ENCODE measurements at regions of chr5 and their contacts with region 1.

Region 1: GRCh38 chr5:176481711-176482110 is 33.5 kb downstream of the FAF2 start:
- DNase-seq: no peak
- H3K4me3 ChIP-seq: no peak overlapping the region
- H3K27ac ChIP-seq: no peak overlapping the region
- H3K4me1 ChIP-seq: no peaks in the 10 kb centered on the region
- H3K27me3 ChIP-seq: no peaks in the 10 kb centered on the region
- CTCF ChIP-seq: no peak
- POLR2A ChIP-seq: no peak

Region 2: DNA sequence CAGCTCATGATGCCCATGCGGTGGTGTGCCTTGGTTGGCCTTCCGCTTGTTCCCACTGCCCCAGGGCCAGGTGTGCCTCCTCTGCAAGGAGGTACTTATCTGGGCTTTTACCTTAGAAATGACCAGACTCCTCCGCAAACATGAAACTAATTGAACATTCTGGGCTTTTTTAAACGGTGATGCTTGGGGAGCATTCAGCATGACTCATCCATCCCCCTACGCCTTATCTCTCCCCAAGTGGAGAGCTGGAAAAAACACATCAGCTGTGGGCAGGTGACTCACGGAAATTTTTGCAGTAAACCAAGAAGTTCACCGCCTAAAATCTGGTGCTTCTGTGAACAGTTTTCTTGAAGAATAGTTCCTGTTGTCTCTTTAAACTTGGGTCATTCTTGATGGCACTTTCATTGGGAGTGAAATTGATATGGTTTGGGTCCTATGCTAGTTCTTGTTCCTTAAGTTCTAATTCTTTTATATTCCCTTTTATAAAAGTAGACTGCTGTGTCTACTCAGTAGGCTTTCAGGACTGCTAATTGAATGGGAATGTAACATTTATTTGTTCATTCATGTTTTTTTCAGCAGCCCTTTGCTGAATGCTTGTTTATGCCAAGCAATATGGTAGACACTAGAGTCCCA is 963.8 kb before region 1 on chr5:
- CTCF ChIA-PET with region 1: no interaction called
- POLR2A ChIA-PET with region 1: no interaction called
- dilution Hi-C with region 1: no loop called
- intact Hi-C with region 1: no loop called
- DNase-seq: no peak
- H3K4me3 ChIP-seq: no peak overlapping the region
- H3K27ac ChIP-seq: no peak overlapping the region
- H3K4me1 ChIP-seq: no peaks in the 10 kb centered on the region
- H3K27me3 ChIP-seq: no peaks in the 10 kb centered on the region
- CTCF ChIP-seq: no peak
- POLR2A ChIP-seq: no peak

Region 3: DNA sequence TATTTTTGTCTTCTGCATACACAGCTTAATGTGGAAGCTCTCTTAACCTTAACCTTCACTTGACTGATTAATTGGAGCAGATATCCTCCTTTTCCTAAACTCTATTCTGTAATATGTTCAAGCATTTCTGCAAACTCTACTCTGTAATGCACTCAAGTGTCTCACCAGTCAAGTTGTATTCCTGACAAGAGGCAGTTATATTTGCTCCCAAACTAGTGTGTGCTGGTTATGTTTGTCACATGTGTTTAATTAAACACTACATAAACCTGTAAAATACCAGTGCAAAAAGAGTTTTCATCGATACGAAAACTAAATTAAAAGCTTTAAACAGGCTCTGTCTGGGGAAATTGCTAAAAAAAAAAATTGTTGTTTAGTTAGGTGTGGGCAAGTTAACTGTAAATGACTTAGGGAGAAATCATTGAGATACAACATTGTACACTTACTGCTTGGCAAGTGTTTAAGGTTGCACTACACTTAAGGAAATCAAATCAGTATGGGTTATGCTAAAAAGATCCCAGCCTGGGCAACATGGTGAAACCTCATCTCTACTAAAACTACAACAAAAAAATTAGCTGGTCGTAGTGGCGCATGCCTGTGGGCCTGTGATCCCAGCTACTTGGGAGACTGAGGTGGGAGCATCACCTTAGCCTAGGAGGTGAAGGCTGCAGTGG is 26.9 kb before region 1 on chr5:
- CTCF ChIA-PET with region 1: no interaction called
- POLR2A ChIA-PET with region 1: no interaction called
- dilution Hi-C with region 1: no loop called
- intact Hi-C with region 1: loop called (anchors 1 kb)
- DNase-seq: no peak
- H3K4me3 ChIP-seq: no peak overlapping the region
- H3K27ac ChIP-seq: no peak overlapping the region
- H3K4me1 ChIP-seq: no peaks in the 10 kb centered on the region
- H3K27me3 ChIP-seq: no peaks in the 10 kb centered on the region
- CTCF ChIP-seq: no peak
- POLR2A ChIP-seq: no peak

Region 4: DNA sequence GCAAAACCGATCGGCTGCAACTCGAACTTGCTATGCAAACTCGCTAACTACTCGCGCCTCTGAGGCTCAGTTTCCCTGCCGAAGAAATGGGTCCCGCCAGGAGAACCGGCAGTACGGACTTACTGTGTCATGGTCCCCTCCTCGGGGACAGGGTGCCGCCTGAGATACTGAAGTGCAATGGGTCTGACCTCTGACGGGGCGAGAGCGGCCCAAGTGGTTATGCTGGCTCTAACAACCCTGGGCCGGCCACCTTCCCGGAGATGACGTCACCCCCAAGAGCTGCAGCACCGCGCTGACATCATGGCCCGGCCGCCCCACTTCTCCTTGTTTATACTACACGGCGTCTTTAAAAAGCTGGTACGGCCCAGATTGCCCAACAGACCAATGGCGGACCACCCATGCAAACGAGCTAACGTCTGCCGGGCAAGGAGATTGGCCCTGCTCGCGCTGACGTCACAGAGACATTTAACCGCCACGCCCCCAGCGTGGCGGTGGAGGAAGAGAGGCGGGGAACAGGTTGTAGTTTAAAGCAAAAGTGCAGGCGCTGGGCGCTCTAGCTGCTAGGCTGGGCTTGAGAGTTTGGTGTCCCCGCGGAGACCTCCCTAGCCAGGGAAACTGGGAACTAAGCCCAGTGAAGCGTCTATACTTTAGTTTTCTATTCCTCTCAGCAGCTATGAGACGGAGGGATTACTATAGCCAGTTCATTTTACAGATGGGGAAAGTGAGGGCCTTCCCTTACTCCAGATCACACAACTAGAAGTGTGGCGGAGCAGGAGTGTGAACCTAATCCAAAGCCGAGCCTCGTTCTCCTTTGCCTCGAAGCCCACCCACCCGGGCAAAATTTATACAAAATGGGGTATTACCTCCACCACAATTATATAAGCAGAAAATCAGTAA is 56.1 kb after region 1 on chr5:
- CTCF ChIA-PET with region 1: no interaction called
- POLR2A ChIA-PET with region 1: no interaction called
- dilution Hi-C with region 1: no loop called
- intact Hi-C with region 1: no loop called
- DNase-seq: peak; percentile 99
- H3K4me3 ChIP-seq: peak overlapping the region; percentile 68 to 79 (median 79)
- H3K27ac ChIP-seq: peak overlapping the region; percentile 83
- H3K4me1 ChIP-seq: peaks cover 59% of the 10 kb centered on the region
- H3K27me3 ChIP-seq: no peaks in the 10 kb centered on the region
- CTCF ChIP-seq: no peak
- POLR2A ChIP-seq: no peak

Region 5: DNA sequence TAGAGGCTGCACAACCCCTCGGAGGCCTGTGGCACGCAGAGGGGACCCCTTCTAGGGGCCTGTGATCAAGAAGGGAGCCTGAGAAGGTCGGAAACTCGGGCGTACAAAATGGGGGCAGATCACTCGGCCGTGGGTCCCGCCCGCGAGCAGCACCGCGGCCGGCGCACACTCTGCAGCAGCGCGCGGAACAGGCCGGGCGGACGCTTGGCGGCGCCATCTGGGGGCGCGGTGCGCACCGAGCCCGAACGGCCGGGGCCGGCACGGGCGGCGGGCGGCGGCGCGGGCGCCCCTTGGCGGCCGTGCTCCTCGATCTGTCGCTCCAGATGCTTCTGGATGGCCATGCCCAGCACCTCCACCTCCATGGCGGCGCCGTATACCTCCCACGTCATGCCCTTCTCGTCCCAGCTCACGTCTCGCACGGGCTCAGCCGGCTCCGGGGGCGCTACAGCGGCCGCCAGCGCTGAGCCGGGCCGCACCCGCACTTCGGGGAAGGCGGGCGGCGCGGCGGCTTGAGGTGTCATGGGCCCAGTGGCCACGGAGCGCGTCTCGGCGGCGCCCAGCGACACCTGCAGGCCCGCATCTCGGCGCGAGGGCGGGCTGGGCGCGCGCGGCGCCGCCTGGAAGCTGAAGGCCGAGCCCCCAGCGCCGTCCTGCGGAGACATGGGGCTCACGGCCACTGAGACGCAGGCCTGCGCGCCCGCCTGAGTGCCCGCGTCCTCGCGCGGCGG is 115.1 kb after region 1 on chr5:
- CTCF ChIA-PET with region 1: no interaction called
- POLR2A ChIA-PET with region 1: no interaction called
- dilution Hi-C with region 1: no loop called
- intact Hi-C with region 1: no loop called
- DNase-seq: peak; percentile 60
- H3K4me3 ChIP-seq: peak overlapping the region in 1 of 3 experiments; percentile 34
- H3K27ac ChIP-seq: no peak overlapping the region
- H3K4me1 ChIP-seq: no peaks in the 10 kb centered on the region
- H3K27me3 ChIP-seq: no peaks in the 10 kb centered on the region
- CTCF ChIP-seq: peak in 1 of 2 donors; percentile 26
- POLR2A ChIP-seq: no peak

Region 6: DNA sequence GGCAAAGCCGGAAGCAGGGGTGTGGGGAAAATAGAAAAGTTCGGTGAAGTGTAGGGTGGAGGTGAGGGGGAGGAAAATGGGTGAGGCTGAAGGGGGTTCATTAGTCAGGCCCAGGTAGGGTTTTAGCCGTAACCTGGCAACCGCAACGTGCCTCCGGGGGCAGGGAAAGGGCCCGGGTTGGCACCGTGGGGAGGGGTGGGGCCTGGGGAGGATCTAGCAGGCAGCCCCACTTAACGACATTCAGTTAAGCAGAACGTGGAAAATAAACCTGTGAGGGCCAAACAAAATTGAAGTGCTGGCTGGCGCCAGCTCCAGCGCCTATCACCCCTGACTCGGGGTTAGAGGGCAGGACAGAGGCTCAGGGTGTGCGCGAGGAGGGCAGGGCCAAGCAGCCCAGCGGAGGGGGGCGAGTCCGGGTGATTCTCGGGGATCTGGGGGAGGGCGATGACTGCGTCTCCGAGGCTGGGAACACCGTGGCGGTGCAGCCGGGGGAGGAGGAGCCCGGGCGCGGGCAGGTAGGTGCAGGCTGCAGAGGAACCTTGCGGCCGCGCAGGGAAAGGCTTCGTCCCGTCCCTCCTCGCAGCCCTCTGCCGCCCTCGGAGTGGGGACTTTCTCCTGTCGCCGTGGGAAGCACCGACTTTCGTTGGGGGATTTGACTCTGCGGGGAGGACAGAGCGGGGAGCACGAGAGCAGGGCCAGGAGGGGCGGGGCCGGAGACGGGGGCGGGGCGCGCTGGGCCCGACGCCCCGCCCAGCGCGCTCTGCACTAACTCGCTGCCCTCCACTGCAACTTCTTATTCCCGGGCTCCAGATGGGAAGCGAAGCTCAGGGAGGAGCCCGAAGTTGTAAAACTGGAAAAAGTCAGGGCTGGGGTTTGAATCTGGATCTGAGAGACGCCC is 881.1 kb after region 1 on chr5:
- CTCF ChIA-PET with region 1: no interaction called
- POLR2A ChIA-PET with region 1: no interaction called
- dilution Hi-C with region 1: no loop called
- intact Hi-C with region 1: no loop called
- DNase-seq: peak; percentile 53
- H3K4me3 ChIP-seq: peak overlapping the region in 2 of 3 experiments; percentile 17 to 24
- H3K27ac ChIP-seq: no peak overlapping the region
- H3K4me1 ChIP-seq: peaks cover 25% of the 10 kb centered on the region
- H3K27me3 ChIP-seq: no peaks in the 10 kb centered on the region
- CTCF ChIP-seq: no peak
- POLR2A ChIP-seq: no peak